CD4-positive, alpha-beta memory T cell (primary cell): ENCODE measurements at regions of chr14 and their contacts with region 1.

Region 1: GRCh38 chr14:22549981-22550673 is 38.9 kb downstream of the DAD1 start:
- DNase-seq: peak; percentile 58 to 96 (median 63)
- H3K4me3 ChIP-seq: peak overlapping the region; percentile 3 to 7
- H3K4me3 Mint-ChIP-seq: peak overlapping the region; percentile 64 to 91 (median 78)
- H3K27ac ChIP-seq: peak overlapping the region; percentile 97
- H3K27ac Mint-ChIP-seq: peak overlapping the region; percentile 97 to 100 (median 100)
- H3K4me1 ChIP-seq: peaks cover 99% of the 10 kb centered on the region
- H3K4me1 Mint-ChIP-seq: peaks cover 87 to 97% (median 93%) of the 10 kb centered on the region in 4 donors
- H3K27me3 ChIP-seq: no peaks in the 10 kb centered on the region
- H3K27me3 Mint-ChIP-seq: no peaks in the 10 kb centered on the region

Region 2: DNA sequence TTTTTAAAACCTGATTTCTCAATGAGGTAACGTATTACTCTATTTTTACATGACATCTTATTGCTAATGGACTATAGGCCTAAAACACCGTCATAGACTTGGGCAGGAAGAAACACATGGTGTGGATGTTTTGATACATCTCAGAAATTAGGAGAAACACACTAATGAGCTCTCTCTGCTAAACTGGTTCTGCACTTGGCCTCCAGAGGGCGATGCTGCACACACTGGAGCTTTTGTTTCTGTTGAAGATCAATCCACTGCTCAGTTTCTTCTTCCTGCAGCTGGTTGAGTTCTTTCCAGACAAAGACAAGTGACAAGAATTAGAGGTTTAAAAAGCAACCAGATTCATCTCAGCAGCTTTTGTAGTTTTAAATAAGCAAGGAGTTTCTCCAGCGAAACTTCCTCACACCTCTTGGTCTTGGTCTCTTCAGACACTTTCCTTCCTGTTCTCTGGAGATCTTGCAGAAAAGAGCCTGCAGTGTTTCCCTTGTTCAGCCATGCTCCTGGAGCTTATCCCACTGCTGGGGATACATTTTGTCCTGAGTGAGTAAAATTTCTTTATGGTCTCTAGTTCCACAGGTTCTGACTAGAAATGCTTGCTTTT is 698.0 kb before region 1 on chr14:
- CTCF ChIA-PET with region 1: interaction called, 18 read pairs
- POLR2A ChIA-PET with region 1: interaction called, 49 read pairs
- intact Hi-C with region 1: no loop called
- DNase-seq: peak; percentile 62 to 69 (median 66)
- H3K4me3 ChIP-seq: peak overlapping the region in 1 of 2 donors; percentile 27
- H3K4me3 Mint-ChIP-seq: peak overlapping the region; percentile 77 to 87 (median 82)
- H3K27ac ChIP-seq: no peak overlapping the region
- H3K27ac Mint-ChIP-seq: peak overlapping the region; percentile 58 to 93 (median 81)
- H3K4me1 ChIP-seq: no peaks in the 10 kb centered on the region
- H3K4me1 Mint-ChIP-seq: peaks cover 5 to 14% (median 9%) of the 10 kb centered on the region in 4 donors
- H3K27me3 ChIP-seq: no peaks in the 10 kb centered on the region
- H3K27me3 Mint-ChIP-seq: peaks cover 5 to 12% of the 10 kb centered on the region in 2 donors

Region 3: DNA sequence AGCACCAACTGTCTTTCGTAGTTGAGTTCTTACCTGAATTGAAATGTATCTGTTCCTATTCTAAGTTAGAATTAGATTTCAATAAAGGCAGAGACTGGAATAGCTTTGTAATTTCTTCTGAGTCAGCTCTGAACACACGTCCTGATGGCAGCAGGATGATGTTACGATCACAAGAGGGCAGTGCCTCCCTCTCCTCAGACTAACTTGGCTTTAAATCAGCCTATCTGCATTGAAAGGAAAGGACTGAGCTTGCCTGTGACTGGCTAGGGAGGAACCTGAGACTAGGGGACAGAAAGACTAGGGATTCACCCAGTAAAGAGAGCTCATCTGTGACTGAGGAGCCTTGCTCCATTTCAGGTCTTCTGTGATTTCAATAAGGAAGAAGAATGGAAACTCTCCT is 552.8 kb before region 1 on chr14:
- CTCF ChIA-PET with region 1: interaction called, 6 read pairs
- POLR2A ChIA-PET with region 1: interaction called, 37 read pairs
- intact Hi-C with region 1: no loop called
- DNase-seq: peak; percentile 33 to 58 (median 52)
- H3K4me3 ChIP-seq: peak overlapping the region in 1 of 2 donors; percentile 27
- H3K4me3 Mint-ChIP-seq: peak overlapping the region; percentile 87 to 96 (median 92)
- H3K27ac ChIP-seq: peak overlapping the region; percentile 51
- H3K27ac Mint-ChIP-seq: peak overlapping the region in 6 of 7 donors; percentile 86 to 97 (median 92)
- H3K4me1 ChIP-seq: peaks cover 18% of the 10 kb centered on the region
- H3K4me1 Mint-ChIP-seq: peaks cover 5 to 15% (median 8%) of the 10 kb centered on the region in 4 donors
- H3K27me3 ChIP-seq: no peaks in the 10 kb centered on the region
- H3K27me3 Mint-ChIP-seq: no peaks in the 10 kb centered on the region

Region 4: GRCh38 chr14:22519877-22520685 is 30.0 kb before region 1 on chr14:
- CTCF ChIA-PET with region 1: interaction called, 11 read pairs
- POLR2A ChIA-PET with region 1: interaction called, 1,762 read pairs
- intact Hi-C with region 1: loop called (anchors 5 kb)
- DNase-seq: no peak
- H3K4me3 ChIP-seq: peak overlapping the region; percentile 2 to 39
- H3K4me3 Mint-ChIP-seq: peak overlapping the region; percentile 83 to 91 (median 90)
- H3K27ac ChIP-seq: peak overlapping the region; percentile 76
- H3K27ac Mint-ChIP-seq: peak overlapping the region; percentile 95 to 100 (median 95)
- H3K4me1 ChIP-seq: peaks cover 98% of the 10 kb centered on the region
- H3K4me1 Mint-ChIP-seq: peaks cover 70 to 98% (median 84%) of the 10 kb centered on the region in 4 donors
- H3K27me3 ChIP-seq: no peaks in the 10 kb centered on the region
- H3K27me3 Mint-ChIP-seq: no peaks in the 10 kb centered on the region

Region 5: DNA sequence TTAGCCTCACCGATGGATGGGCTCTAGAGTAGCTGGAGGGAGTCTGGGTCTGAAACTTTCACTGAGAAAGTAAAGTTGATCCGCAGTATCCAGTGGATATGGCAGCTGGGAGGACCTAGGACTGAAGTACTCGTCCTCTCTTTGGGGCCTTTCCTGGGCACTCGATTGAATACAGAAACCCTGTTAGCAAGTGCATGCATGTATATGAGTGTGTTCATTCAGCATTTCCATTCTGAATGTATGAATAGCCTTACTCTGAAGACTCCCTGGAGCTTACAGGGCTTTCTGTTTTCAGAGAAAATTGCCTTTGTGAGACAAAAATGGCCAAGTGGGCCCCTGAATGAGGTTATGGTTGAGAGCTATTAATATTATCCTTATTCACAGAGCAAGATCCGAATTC is 23.9 kb before region 1 on chr14:
- CTCF ChIA-PET with region 1: interaction called, 48 read pairs
- POLR2A ChIA-PET with region 1: interaction called, 1,762 read pairs
- intact Hi-C with region 1: loop called (anchors 5 kb)
- DNase-seq: no peak
- H3K4me3 ChIP-seq: peak overlapping the region; percentile 33 to 39
- H3K4me3 Mint-ChIP-seq: peak overlapping the region; percentile 83 to 91 (median 90)
- H3K27ac ChIP-seq: peak overlapping the region; percentile 76
- H3K27ac Mint-ChIP-seq: peak overlapping the region; percentile 86 to 100 (median 96)
- H3K4me1 ChIP-seq: peaks cover 97% of the 10 kb centered on the region
- H3K4me1 Mint-ChIP-seq: peaks cover 71 to 99% (median 81%) of the 10 kb centered on the region in 4 donors
- H3K27me3 ChIP-seq: no peaks in the 10 kb centered on the region
- H3K27me3 Mint-ChIP-seq: no peaks in the 10 kb centered on the region

Region 6: DNA sequence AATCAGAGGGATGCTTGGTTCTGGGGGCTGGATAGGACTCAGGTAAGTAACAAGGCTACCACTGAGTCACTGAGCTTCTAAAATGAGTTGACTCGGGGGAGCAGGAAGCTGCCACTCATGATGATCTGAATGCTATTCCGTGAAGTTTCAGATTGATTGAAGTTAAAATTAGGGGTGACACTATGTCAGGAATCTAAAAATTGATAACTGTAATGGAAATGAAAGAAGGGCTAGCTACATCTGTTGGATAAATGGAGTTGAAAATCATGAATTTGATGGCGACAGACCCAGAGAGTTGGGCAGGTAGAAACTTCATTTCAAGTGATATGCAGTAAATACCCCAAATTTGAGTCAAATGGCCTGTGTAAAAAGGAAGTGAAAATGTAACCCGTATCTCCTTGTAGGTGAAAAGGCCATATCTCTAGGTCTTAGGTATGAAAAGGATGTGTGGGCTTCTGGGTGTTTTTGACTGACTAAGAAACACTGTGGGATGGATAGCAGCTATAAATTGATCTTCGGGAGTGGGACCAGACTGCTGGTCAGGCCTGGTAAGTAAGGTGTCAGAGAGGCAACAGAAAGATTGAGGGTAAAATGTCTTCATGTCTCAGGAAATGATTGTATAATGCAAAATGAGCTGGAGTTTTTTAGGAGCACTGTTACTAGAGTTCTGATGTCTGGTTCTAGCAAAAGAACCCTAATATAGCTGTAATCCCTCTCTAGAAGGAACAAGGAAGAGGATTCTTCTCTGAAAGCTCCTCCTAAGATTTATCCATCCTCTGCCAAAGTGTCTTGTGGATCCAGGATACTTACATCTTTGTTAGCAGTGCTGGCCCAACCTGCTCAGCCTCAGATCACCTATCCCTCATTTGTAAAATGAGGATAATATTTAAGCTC is 18.4 kb before region 1 on chr14:
- CTCF ChIA-PET with region 1: interaction called, 81 read pairs
- POLR2A ChIA-PET with region 1: interaction called, 1,762 read pairs
- intact Hi-C with region 1: loop called (anchors 2 kb)
- DNase-seq: peak in 2 of 5 donors; percentile 51 to 65
- H3K4me3 ChIP-seq: peak overlapping the region; percentile 44 to 49
- H3K4me3 Mint-ChIP-seq: peak overlapping the region; percentile 84 to 91 (median 90)
- H3K27ac ChIP-seq: peak overlapping the region; percentile 58
- H3K27ac Mint-ChIP-seq: peak overlapping the region; percentile 92 to 100 (median 97)
- H3K4me1 ChIP-seq: peaks cover 96% of the 10 kb centered on the region
- H3K4me1 Mint-ChIP-seq: peaks cover 78 to 99% (median 86%) of the 10 kb centered on the region in 4 donors
- H3K27me3 ChIP-seq: no peaks in the 10 kb centered on the region
- H3K27me3 Mint-ChIP-seq: no peaks in the 10 kb centered on the region

Region 7: GRCh38 chr14:22630486-22630885 is 80.4 kb after region 1 on chr14:
- CTCF ChIA-PET with region 1: no interaction called
- POLR2A ChIA-PET with region 1: no interaction called
- intact Hi-C with region 1: no loop called
- DNase-seq: no peak
- H3K4me3 ChIP-seq: no peak overlapping the region
- H3K4me3 Mint-ChIP-seq: no peak overlapping the region
- H3K27ac ChIP-seq: no peak overlapping the region
- H3K27ac Mint-ChIP-seq: no peak overlapping the region
- H3K4me1 ChIP-seq: no peaks in the 10 kb centered on the region
- H3K4me1 Mint-ChIP-seq: no peaks in the 10 kb centered on the region
- H3K27me3 ChIP-seq: no peaks in the 10 kb centered on the region
- H3K27me3 Mint-ChIP-seq: peaks cover 6 to 13% of the 10 kb centered on the region in 2 donors